Caco-2 (cell line): ENCODE measurements at regions of chr3 and their contacts with region 1.

Region 1: DNA sequence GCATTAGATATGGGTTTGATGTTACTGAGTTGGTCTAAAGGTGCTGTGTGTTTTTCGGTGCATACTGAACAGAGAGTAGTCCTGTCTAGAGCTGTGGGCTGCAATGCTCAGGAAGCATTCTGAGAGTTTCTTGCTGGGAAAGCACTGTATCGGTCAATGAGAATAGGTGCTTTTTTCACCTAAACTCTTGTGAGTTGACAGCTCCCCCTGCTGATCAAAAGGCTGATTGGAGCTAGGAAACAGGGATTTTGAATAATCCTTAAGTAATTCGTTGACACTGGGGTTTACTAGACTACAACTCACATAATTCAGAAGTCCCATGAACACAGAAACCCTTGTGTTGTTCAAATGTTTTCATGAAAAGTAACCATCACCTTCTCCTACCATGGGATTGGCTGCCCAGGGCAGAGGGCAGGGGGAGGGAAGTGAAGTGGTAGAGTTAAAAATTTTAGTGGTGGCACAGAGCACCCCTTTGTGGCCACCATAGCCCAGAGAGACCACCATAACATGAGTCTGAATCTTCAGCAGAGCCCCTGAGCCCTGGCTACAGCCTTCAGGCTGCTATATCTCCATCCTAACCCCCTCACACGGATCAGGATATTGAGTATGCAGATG is 13.0 kb upstream of the MANF start:
- DNase-seq: peak; percentile 56 to 70
- H3K4me3 ChIP-seq: no peak overlapping the region
- H3K4me3 Mint-ChIP-seq: no peak overlapping the region
- H3K27ac Mint-ChIP-seq: no peak overlapping the region
- H3K4me1 ChIP-seq: no peaks in the 10 kb centered on the region
- H3K4me1 Mint-ChIP-seq: no peaks in the 10 kb centered on the region
- H3K27me3 ChIP-seq: no peaks in the 10 kb centered on the region
- H3K27me3 Mint-ChIP-seq: peaks cover 30% of the 10 kb centered on the region
- CTCF ChIP-seq: peak; percentile 64 to 70

Region 2: DNA sequence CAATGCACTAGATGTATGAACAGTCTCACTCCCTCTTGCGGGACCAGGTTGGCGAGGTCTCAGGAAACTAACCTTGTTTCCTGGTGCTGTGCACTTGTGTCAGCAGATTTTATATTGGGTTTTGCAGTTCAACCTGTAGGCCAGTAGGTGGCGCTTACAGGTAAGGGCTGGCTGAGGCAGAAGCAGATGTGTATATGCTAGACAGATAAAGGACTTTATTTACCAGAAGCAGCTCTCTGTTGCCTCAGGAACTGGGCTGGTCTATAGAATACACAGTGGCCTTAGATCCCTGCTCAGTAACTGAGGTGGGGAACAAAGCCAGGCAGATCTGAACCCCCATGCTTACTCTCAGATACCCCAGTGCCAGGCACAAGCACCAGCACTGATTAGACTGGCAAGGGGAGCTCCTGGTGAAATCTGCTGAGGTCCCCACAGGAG is 400.5 kb before region 1 on chr3:
- CTCF ChIA-PET with region 1: interaction called, 10 read pairs
- POLR2A ChIA-PET with region 1: no interaction called
- intact Hi-C with region 1: loop called (anchors 2 kb)
- DNase-seq: peak; percentile 60 to 63
- H3K4me3 ChIP-seq: no peak overlapping the region
- H3K4me3 Mint-ChIP-seq: no peak overlapping the region
- H3K27ac Mint-ChIP-seq: no peak overlapping the region
- H3K4me1 ChIP-seq: no peaks in the 10 kb centered on the region
- H3K4me1 Mint-ChIP-seq: no peaks in the 10 kb centered on the region
- H3K27me3 ChIP-seq: no peaks in the 10 kb centered on the region
- H3K27me3 Mint-ChIP-seq: no peaks in the 10 kb centered on the region
- CTCF ChIP-seq: peak; percentile 69 to 83

Region 3: GRCh38 chr3:51099794-51100535 is 272.1 kb before region 1 on chr3:
- CTCF ChIA-PET with region 1: interaction called, 41 read pairs
- POLR2A ChIA-PET with region 1: no interaction called
- intact Hi-C with region 1: loop called (anchors 1 kb)
- DNase-seq: peak; percentile 51 to 69
- H3K4me3 ChIP-seq: no peak overlapping the region
- H3K4me3 Mint-ChIP-seq: no peak overlapping the region
- H3K27ac Mint-ChIP-seq: no peak overlapping the region
- H3K4me1 ChIP-seq: no peaks in the 10 kb centered on the region
- H3K4me1 Mint-ChIP-seq: peaks cover 9% of the 10 kb centered on the region
- H3K27me3 ChIP-seq: no peaks in the 10 kb centered on the region
- H3K27me3 Mint-ChIP-seq: peaks cover 8% of the 10 kb centered on the region
- CTCF ChIP-seq: peak; percentile 65 to 90

Region 4: DNA sequence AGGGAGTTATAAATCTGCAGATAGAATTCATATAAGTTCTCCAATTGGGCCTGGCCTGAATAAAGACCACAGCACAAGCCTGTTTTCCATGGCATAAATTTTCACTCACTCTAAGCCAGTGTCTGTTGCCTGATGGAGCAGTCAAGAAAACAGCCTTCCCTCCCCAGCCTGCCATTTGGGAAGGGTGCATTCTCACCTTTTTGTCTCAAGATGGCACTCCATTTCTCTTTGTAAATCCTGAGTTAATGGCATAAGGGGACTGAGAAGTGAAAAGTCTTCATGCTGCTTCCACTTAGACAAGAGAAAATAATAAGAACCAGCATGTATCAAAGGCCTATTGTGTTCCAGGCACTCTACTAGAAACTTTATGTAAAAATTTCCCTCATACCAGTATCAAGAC is 102.6 kb before region 1 on chr3:
- CTCF ChIA-PET with region 1: no interaction called
- POLR2A ChIA-PET with region 1: no interaction called
- intact Hi-C with region 1: loop called (anchors 2 kb)
- DNase-seq: peak in 1 of 2 experiments; percentile 3
- H3K4me3 ChIP-seq: no peak overlapping the region
- H3K4me3 Mint-ChIP-seq: no peak overlapping the region
- H3K27ac Mint-ChIP-seq: no peak overlapping the region
- H3K4me1 ChIP-seq: no peaks in the 10 kb centered on the region
- H3K4me1 Mint-ChIP-seq: no peaks in the 10 kb centered on the region
- H3K27me3 ChIP-seq: no peaks in the 10 kb centered on the region
- H3K27me3 Mint-ChIP-seq: peaks cover 8% of the 10 kb centered on the region
- CTCF ChIP-seq: no peak

Region 5: DNA sequence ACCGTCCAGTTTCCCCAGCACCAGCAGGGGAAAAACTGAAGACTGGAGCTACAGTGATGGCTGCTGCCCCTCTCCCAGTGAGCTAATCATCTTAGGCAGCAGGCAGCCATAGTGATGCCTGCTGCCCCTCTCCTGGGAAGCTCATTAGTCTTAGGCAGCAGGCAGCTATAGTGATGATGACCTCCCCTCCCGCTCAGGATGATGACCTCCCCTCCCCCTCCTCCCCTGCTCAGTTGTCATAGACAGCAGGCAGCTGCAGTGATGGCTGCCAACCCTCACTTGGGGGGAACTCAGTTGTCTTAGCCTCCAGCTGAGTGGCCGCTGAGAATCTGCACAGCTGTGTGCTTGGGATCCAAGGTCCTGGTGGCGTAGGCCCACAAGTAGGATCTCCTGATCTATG is 67.8 kb before region 1 on chr3:
- CTCF ChIA-PET with region 1: no interaction called
- POLR2A ChIA-PET with region 1: no interaction called
- intact Hi-C with region 1: no loop called
- DNase-seq: no peak
- H3K4me3 ChIP-seq: no peak overlapping the region
- H3K4me3 Mint-ChIP-seq: no peak overlapping the region
- H3K27ac Mint-ChIP-seq: no peak overlapping the region
- H3K4me1 ChIP-seq: no peaks in the 10 kb centered on the region
- H3K4me1 Mint-ChIP-seq: no peaks in the 10 kb centered on the region
- H3K27me3 ChIP-seq: no peaks in the 10 kb centered on the region
- H3K27me3 Mint-ChIP-seq: peaks cover 20% of the 10 kb centered on the region
- CTCF ChIP-seq: no peak

Region 6: DNA sequence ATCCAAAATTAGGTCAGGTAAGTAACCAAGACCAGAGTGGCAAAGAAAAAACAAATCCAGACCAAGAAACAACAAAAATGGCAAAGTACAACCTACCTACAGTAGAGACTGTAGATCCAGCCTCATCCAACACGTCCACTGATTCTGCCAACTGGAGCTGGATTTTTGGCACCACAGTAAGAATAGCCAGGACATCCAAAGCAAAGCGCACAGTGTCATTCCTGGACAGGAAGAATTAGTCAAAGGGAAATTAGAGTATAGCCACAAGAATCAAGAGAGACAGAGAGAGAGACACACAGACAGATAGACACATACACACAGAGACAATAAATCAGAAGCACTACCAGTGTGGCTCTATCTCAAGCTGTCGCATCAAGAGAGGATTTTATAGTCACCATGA is 50.2 kb after region 1 on chr3:
- CTCF ChIA-PET with region 1: no interaction called
- POLR2A ChIA-PET with region 1: no interaction called
- intact Hi-C with region 1: no loop called
- DNase-seq: no peak
- H3K4me3 ChIP-seq: no peak overlapping the region
- H3K4me3 Mint-ChIP-seq: no peak overlapping the region
- H3K27ac Mint-ChIP-seq: no peak overlapping the region
- H3K4me1 ChIP-seq: no peaks in the 10 kb centered on the region
- H3K4me1 Mint-ChIP-seq: no peaks in the 10 kb centered on the region
- H3K27me3 ChIP-seq: no peaks in the 10 kb centered on the region
- H3K27me3 Mint-ChIP-seq: no peaks in the 10 kb centered on the region
- CTCF ChIP-seq: no peak

Region 7: DNA sequence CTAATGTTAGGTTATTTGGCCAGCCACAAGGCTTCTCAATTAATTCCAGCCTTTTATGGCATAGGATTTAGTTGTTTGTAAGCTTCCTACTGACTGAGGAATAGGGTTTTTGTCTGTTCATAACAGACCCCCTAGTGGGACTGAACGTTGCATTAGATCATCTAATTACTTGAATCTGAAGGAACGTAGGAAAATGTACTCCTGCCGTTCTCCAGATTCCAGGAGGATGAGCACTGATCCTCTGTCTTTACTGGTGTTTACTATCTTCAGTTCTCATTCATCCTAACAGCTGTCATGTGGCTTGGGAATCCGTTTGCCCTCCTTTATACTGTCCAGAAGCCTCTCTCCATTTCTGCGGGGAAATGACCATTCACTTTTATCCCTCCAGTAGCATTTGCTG is 219.2 kb after region 1 on chr3:
- CTCF ChIA-PET with region 1: no interaction called
- POLR2A ChIA-PET with region 1: no interaction called
- intact Hi-C with region 1: no loop called
- DNase-seq: no peak
- H3K4me3 ChIP-seq: no peak overlapping the region
- H3K4me3 Mint-ChIP-seq: no peak overlapping the region
- H3K27ac Mint-ChIP-seq: no peak overlapping the region
- H3K4me1 ChIP-seq: no peaks in the 10 kb centered on the region
- H3K4me1 Mint-ChIP-seq: no peaks in the 10 kb centered on the region
- H3K27me3 ChIP-seq: no peaks in the 10 kb centered on the region
- H3K27me3 Mint-ChIP-seq: no peaks in the 10 kb centered on the region
- CTCF ChIP-seq: no peak